Naive thymus-derived CD4-positive, alpha-beta T cell (primary cell): ENCODE measurements at regions of chr1 and their contacts with region 1.

Region 1: GRCh38 chr1:26700711-26701110 is 4.9 kb downstream of the ARID1A start:
- DNase-seq: no peak
- ATAC-seq: no peak
- H3K4me3 ChIP-seq: peak overlapping the region; percentile 25
- H3K4me3 Mint-ChIP-seq: no peak overlapping the region
- H3K27ac ChIP-seq: peak overlapping the region; percentile 83
- H3K27ac Mint-ChIP-seq: no peak overlapping the region
- H3K4me1 ChIP-seq: peaks cover 63 to 66% of the 10 kb centered on the region in 2 donors
- H3K4me1 Mint-ChIP-seq: peaks cover 0 to 10% (median 8%) of the 10 kb centered on the region in 7 donors
- H3K27me3 ChIP-seq: no peaks in the 10 kb centered on the region
- H3K27me3 Mint-ChIP-seq: no peaks in the 10 kb centered on the region

Region 2: DNA sequence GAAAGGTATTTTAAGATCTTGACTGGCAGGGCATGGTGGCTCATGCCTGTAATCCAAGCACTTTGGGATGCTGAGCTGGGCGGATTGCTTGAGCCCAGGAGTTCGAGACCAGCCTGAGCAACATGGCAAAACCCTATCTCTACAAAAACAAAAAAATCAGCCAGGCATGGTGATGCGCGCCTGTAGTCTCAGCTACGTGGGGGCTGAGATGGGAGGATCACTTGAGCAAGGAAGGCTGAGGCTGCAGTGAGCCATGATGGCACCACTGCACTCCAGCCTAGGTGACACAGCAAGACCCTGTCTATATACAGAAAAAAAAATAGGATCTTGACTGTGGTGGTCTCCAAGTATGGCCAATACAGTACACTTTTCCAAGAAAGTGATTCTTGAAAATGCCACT is 11.1 kb after region 1 on chr1:
- CTCF ChIA-PET with region 1: no interaction called
- POLR2A ChIA-PET with region 1: interaction called, 21 read pairs
- intact Hi-C with region 1: loop called in 1 of 2 experiments (anchors 1 kb)
- DNase-seq: no peak
- ATAC-seq: no peak
- H3K4me3 ChIP-seq: no peak overlapping the region
- H3K4me3 Mint-ChIP-seq: peak overlapping the region in 6 of 10 donors; percentile 3 to 70 (median 40)
- H3K27ac ChIP-seq: no peak overlapping the region
- H3K27ac Mint-ChIP-seq: peak overlapping the region in 5 of 9 donors; percentile 29 to 85 (median 68)
- H3K4me1 ChIP-seq: peaks cover 44 to 54% of the 10 kb centered on the region in 2 donors
- H3K4me1 Mint-ChIP-seq: peaks cover 51 to 87% (median 77%) of the 10 kb centered on the region in 7 donors
- H3K27me3 ChIP-seq: no peaks in the 10 kb centered on the region
- H3K27me3 Mint-ChIP-seq: no peaks in the 10 kb centered on the region

Region 3: GRCh38 chr1:26717017-26717491 is 16.3 kb after region 1 on chr1:
- CTCF ChIA-PET with region 1: interaction called, 4 read pairs
- POLR2A ChIA-PET with region 1: interaction called, 12 read pairs
- intact Hi-C with region 1: loop called in 1 of 2 experiments (anchors 1 kb)
- DNase-seq: no peak
- ATAC-seq: no peak
- H3K4me3 ChIP-seq: no peak overlapping the region
- H3K4me3 Mint-ChIP-seq: peak overlapping the region in 7 of 10 donors; percentile 15 to 70 (median 31)
- H3K27ac ChIP-seq: no peak overlapping the region
- H3K27ac Mint-ChIP-seq: peak overlapping the region in 7 of 9 donors; percentile 25 to 90 (median 77)
- H3K4me1 ChIP-seq: peaks cover 66 to 71% of the 10 kb centered on the region in 2 donors
- H3K4me1 Mint-ChIP-seq: peaks cover 80 to 95% (median 89%) of the 10 kb centered on the region in 7 donors
- H3K27me3 ChIP-seq: no peaks in the 10 kb centered on the region
- H3K27me3 Mint-ChIP-seq: no peaks in the 10 kb centered on the region

Region 4: DNA sequence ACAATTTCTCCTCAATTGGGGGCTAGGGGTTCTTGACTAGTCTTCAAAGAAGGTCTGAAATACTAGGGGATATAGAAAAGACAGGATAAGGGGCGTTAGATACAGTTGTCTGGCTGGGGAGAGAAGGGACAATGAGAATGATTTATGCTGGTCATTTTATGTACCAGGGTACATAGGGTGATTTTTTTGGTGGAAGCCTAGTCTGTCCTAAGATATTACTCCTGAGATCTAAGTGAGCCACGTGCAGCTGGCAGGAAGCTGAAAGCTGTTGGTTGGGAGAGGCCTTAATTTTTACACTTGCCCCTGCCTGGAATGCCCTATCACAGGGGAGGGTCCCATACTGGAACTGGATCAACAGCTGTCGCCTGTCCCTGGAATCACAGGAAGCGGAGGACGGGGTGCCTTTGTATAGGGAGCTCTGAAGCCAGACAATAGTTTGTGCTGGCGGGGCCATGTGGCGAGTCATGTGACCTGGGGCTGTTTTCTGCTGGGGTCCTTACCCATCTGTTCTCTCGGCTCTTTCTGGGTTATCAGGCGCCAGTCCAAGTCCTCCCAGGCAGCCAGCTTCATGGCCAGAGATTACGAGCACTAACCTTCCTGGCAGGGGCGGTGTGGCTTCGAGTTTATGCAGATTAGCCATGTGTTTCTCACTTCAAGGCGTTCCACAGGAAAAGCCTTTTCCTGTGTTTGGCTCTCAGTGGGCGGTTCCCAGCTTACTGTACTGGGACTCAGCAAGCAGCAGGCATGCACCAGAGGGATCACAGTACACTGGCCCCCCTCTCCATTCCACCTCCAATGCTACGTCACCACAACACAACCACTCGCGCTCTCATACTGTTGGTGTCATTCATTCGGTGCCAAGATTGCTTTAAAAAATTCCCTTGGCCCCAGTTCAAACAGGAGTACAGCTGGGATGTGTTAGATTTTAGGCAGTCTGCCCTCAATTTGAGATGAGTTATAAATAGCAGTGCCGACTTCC is 22.6 kb after region 1 on chr1:
- CTCF ChIA-PET with region 1: interaction called, 7 read pairs
- POLR2A ChIA-PET with region 1: interaction called, 31 read pairs
- intact Hi-C with region 1: loop called (anchors 1 kb)
- DNase-seq: peak in 6 of 9 donors; percentile 18 to 77 (median 36)
- ATAC-seq: peak; percentile 80
- H3K4me3 ChIP-seq: peak overlapping the region; percentile 37
- H3K4me3 Mint-ChIP-seq: peak overlapping the region; percentile 64 to 89 (median 81)
- H3K27ac ChIP-seq: peak overlapping the region; percentile 58
- H3K27ac Mint-ChIP-seq: peak overlapping the region; percentile 8 to 92 (median 77)
- H3K4me1 ChIP-seq: peaks cover 77 to 81% of the 10 kb centered on the region in 2 donors
- H3K4me1 Mint-ChIP-seq: peaks cover 80 to 93% (median 89%) of the 10 kb centered on the region in 7 donors
- H3K27me3 ChIP-seq: no peaks in the 10 kb centered on the region
- H3K27me3 Mint-ChIP-seq: no peaks in the 10 kb centered on the region